PC-9 (cell line): ENCODE measurements at regions of chr20 and their contacts with region 1.

Region 1: GRCh38 chr20:50744143-50744792 is 12.9 kb downstream of the PARD6B start:
- DNase-seq: peak; percentile 72 to 83
- H3K4me3 ChIP-seq: no peak overlapping the region
- H3K27ac ChIP-seq: peak overlapping the region; percentile 76
- H3K4me1 ChIP-seq: peaks cover 94% of the 10 kb centered on the region
- H3K27me3 ChIP-seq: no peaks in the 10 kb centered on the region
- CTCF ChIP-seq: peak; percentile 68

Region 2: GRCh38 chr20:50471204-50471610 is 273.1 kb before region 1 on chr20:
- CTCF ChIA-PET with region 1: no interaction called
- POLR2A ChIA-PET with region 1: interaction called, 10 read pairs
- intact Hi-C with region 1: no loop called
- DNase-seq: peak in 1 of 2 experiments; percentile 80
- H3K4me3 ChIP-seq: no peak overlapping the region
- H3K27ac ChIP-seq: no peak overlapping the region
- H3K4me1 ChIP-seq: peaks cover 28% of the 10 kb centered on the region
- H3K27me3 ChIP-seq: no peaks in the 10 kb centered on the region
- CTCF ChIP-seq: no peak

Region 3: DNA sequence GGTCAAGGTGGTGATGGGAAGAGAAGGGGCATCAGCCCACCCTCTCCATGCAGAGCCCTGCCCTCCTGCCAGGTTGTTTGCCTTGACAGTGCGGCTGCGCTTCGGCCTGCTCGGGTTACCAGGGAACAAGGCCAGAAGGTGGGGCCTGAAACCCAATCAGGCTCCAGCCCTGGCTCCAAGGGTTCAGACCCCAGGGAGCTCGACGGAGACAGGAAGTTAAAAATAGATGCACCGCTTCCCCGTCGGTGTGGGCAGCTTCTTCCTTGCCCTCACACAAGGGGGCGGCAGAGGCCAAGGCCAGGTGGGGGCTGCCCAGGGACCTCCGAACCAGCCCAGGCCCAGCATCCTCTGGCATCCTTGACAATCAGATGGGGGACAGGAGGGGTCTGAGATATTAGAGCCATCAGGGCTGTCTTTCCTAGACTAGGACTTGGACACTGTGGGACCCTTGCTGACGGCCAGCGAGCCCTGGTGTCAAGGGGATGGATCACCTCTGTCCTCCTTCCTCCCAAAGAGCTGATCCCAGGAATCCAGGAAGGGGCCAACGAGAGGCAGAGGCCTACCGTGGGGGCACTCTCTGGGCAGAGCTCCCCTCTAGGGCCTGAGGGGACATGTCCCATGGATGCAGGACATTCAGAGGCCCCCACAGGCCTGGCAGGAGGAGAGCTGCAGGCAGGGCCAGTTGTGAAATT is 118.1 kb before region 1 on chr20:
- CTCF ChIA-PET with region 1: interaction called, 9 read pairs
- POLR2A ChIA-PET with region 1: interaction called, 7 read pairs
- intact Hi-C with region 1: loop called (anchors 1 kb)
- DNase-seq: peak in 1 of 2 experiments; percentile 65
- H3K4me3 ChIP-seq: no peak overlapping the region
- H3K27ac ChIP-seq: no peak overlapping the region
- H3K4me1 ChIP-seq: peaks cover 45% of the 10 kb centered on the region
- H3K27me3 ChIP-seq: no peaks in the 10 kb centered on the region
- CTCF ChIP-seq: peak; percentile 72

Region 4: GRCh38 chr20:50720026-50720425 is 24.2 kb before region 1 on chr20:
- CTCF ChIA-PET with region 1: interaction called, 27 read pairs
- POLR2A ChIA-PET with region 1: no interaction called
- intact Hi-C with region 1: no loop called
- DNase-seq: no peak
- H3K4me3 ChIP-seq: no peak overlapping the region
- H3K27ac ChIP-seq: no peak overlapping the region
- H3K4me1 ChIP-seq: peaks cover 49% of the 10 kb centered on the region
- H3K27me3 ChIP-seq: no peaks in the 10 kb centered on the region
- CTCF ChIP-seq: no peak